ENCODE measurements at regions of chr3 and their contacts with region 1.

Region 1: DNA sequence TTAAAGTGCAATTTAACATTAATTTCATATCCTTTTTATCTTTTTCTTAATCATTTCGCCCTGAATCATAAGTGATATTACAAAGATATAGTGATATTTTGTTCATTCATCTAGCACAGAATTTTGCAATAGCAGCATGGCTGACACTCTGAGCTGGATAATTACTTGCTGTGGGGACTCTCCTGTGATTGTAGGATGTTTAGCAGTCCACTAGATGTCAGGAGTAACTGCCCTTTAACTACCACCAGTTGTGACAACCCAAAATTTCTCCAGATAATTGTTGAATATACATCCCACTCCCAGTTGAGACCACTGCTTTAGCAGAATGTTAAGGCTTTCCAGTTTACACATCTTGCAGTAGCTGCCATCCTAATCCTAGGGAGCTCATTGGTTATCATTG is 196.8 kb upstream of the MBNL1 start:
- DNase-seq: peak in 1 of 2 donors; percentile 63
- ATAC-seq: peak; percentile 68 to 87 (median 81)
- H3K4me3 ChIP-seq: no peak overlapping the region
- H3K4me3 Mint-ChIP-seq: no peak overlapping the region
- H3K27ac ChIP-seq: no peak overlapping the region
- H3K27ac Mint-ChIP-seq: no peak overlapping the region
- H3K4me1 ChIP-seq: no peaks in the 10 kb centered on the region
- H3K4me1 Mint-ChIP-seq: no peaks in the 10 kb centered on the region
- H3K27me3 ChIP-seq: no peaks in the 10 kb centered on the region
- H3K27me3 Mint-ChIP-seq: peaks cover 0 to 3% of the 10 kb centered on the region in 2 donors
- CTCF ChIP-seq: peak; percentile 67

Region 2: GRCh38 chr3:151460774-151461450 is 611.0 kb before region 1 on chr3 and contains the start of gene IGSF10:
- intact Hi-C with region 1: no loop called
- DNase-seq: no peak
- ATAC-seq: no peak
- H3K4me3 ChIP-seq: no peak within 1 kb of the TSS
- H3K4me3 Mint-ChIP-seq: peak within 1 kb of the TSS; percentile 10
- H3K27ac ChIP-seq: no peak within 1 kb of the TSS
- H3K27ac Mint-ChIP-seq: no peak within 1 kb of the TSS
- H3K4me1 ChIP-seq: peaks cover 4% of the 10 kb centered on the region
- H3K4me1 Mint-ChIP-seq: no peaks in the 10 kb centered on the region
- H3K27me3 ChIP-seq: peaks cover 3% of the 10 kb centered on the region
- H3K27me3 Mint-ChIP-seq: peaks cover 18 to 20% of the 10 kb centered on the region in 2 donors
- CTCF ChIP-seq: no peak
- total RNA-seq, gene IGSF10: 0.02 TPM in 1 of 3 donors, not detected in the others

Region 3: DNA sequence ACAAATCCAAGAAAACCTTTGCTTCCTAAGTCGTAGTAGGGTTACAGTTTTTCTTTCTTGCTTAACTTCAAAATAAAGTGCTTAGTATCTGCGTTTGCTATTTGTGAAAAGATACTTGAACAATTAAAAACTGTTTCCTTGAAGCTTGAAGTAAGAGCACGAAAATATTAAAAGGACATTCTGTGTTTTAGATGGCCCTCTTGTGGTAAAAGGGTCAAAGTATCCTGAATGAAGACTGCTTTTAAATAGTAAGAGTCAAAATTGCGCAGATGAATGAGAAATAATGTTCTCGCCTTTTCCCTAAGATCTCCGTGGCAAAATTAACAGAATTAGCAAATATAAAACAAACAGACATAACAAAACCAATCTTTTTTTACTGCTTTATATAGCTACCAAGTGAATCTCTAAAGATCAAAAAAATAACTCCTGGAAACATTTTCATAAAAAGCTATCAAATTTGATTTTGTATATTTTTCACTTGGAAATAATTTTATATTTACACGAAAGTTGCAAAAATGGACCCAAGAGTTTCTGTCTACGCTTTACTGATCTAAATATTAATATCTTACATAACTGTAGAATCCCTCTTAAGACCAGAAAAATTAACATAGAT is 372.2 kb after region 1 on chr3:
- intact Hi-C with region 1: loop called (anchors 1 kb)
- DNase-seq: peak in 1 of 2 donors; percentile 68
- ATAC-seq: peak; percentile 58 to 72 (median 70)
- H3K4me3 ChIP-seq: no peak overlapping the region
- H3K4me3 Mint-ChIP-seq: no peak overlapping the region
- H3K27ac ChIP-seq: peak overlapping the region; percentile 14
- H3K27ac Mint-ChIP-seq: peak overlapping the region; percentile 84 to 85
- H3K4me1 ChIP-seq: peaks cover 10% of the 10 kb centered on the region
- H3K4me1 Mint-ChIP-seq: peaks cover 61% of the 10 kb centered on the region in 2 donors
- H3K27me3 ChIP-seq: no peaks in the 10 kb centered on the region
- H3K27me3 Mint-ChIP-seq: no peaks in the 10 kb centered on the region
- CTCF ChIP-seq: peak; percentile 70

Region 4: DNA sequence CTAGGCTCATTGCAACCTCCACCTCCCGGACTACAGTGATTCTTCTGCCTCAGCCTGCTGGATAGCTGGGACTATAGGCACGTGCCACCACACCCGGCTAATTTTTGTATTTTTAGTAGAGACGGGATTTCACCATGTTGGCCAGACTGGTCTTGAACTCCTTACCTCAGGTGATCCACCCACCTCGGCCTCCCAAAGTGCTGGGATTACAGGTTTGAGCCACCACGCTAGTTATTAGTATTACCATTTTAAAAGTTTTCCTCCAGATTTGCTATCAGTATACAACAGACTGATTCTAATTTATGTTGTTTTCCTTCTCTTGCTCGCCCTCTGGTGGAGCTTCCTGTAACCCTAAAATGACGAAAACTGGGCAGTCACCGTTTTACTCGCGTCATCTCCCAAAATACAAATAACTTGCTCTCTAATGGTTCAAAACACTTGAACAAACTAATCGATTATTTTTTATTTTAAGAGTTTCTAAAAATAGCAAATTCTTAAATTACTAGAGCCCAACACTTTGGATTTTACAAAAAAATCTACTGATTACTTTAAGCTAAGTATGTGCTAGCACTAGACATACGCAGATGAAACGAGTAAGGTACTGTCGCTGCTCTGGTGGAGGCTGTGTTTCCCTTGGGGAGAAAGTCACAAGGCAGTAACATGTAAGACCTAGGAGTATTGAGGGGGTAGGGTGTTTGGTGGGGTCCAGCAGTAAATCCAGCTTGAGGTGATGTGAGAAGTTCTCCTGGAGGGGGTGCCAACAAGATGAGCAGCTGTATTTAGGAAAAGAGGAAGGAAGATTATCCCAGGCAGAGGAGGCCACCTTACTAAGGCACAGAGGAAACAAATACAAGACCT is 400.1 kb after region 1 on chr3:
- intact Hi-C with region 1: loop called (anchors 1 kb)
- DNase-seq: peak; percentile 62 to 87
- ATAC-seq: peak; percentile 93 to 96 (median 94)
- H3K4me3 ChIP-seq: peak overlapping the region; percentile 16
- H3K4me3 Mint-ChIP-seq: peak overlapping the region; percentile 63
- H3K27ac ChIP-seq: peak overlapping the region; percentile 43
- H3K27ac Mint-ChIP-seq: peak overlapping the region; percentile 82 to 90
- H3K4me1 ChIP-seq: peaks cover 9% of the 10 kb centered on the region
- H3K4me1 Mint-ChIP-seq: peaks cover 8 to 16% of the 10 kb centered on the region in 2 donors
- H3K27me3 ChIP-seq: no peaks in the 10 kb centered on the region
- H3K27me3 Mint-ChIP-seq: no peaks in the 10 kb centered on the region
- CTCF ChIP-seq: peak; percentile 76